OCI-LY7 (cell line): ENCODE measurements at regions of chr2 and their contacts with region 1.

Region 1: DNA sequence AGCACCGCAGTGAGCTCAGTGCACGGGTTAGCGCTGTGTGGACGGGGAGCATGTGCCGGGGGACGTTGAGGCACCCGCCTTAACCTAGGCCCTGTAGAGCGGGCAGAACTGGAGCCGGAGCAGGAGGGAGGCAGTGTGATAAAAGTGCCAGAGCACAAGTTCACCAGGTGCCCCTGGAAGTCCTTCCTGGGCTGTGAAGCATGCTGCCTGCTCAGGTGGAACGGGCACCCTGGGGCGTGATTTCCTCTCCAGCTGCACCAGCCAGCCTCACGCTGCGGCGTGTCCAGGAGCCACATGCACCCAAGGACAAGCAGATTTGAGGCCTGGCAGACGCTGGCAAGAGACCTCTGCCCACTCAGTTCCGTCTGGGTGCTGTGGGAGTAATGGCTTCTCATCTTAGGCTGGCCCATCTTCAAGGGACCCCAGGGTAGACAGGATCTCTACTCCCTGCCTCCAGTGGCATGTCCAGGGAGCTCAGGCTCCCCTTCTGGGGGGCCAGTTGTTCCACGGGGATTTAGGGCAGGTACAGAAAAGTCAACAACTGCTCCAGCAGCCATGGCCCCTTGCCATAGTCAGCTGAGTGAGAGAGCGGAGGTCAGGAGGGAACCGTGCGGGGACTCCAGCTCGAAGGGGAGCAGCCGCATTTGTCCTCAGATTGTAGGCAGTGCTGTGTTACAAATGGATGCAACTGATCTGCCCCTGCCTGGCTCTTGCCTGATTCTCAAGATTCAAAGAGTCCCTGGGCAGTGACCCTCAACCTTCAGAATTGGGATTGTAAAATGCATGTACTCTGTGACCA is 50.1 kb downstream of the ITGB1BP1 start:
- DNase-seq: peak; percentile 90
- H3K4me3 ChIP-seq: no peak overlapping the region
- H3K27ac ChIP-seq: peak overlapping the region; percentile 34
- H3K4me1 ChIP-seq: peaks cover 46% of the 10 kb centered on the region
- CTCF ChIP-seq: no peak

Region 2: GRCh38 chr2:9205963-9206948 is 167.0 kb before region 1 on chr2 and contains the start of gene ASAP2:
- CTCF ChIA-PET with region 1: no interaction called
- POLR2A ChIA-PET with region 1: no interaction called
- intact Hi-C with region 1: loop called (anchors 5 kb)
- DNase-seq: peak; percentile 30
- H3K4me3 ChIP-seq: peak within 1 kb of the TSS; percentile 55
- H3K27ac ChIP-seq: no peak within 1 kb of the TSS
- H3K4me1 ChIP-seq: peaks cover 6% of the 10 kb centered on the region
- CTCF ChIP-seq: peak; percentile 65
- total RNA-seq, gene ASAP2: 0.03 TPM in 1 of 2 replicates, not detected in the other